ENCODE measurements at regions of chr14 and their contacts with region 1.

Region 1: DNA sequence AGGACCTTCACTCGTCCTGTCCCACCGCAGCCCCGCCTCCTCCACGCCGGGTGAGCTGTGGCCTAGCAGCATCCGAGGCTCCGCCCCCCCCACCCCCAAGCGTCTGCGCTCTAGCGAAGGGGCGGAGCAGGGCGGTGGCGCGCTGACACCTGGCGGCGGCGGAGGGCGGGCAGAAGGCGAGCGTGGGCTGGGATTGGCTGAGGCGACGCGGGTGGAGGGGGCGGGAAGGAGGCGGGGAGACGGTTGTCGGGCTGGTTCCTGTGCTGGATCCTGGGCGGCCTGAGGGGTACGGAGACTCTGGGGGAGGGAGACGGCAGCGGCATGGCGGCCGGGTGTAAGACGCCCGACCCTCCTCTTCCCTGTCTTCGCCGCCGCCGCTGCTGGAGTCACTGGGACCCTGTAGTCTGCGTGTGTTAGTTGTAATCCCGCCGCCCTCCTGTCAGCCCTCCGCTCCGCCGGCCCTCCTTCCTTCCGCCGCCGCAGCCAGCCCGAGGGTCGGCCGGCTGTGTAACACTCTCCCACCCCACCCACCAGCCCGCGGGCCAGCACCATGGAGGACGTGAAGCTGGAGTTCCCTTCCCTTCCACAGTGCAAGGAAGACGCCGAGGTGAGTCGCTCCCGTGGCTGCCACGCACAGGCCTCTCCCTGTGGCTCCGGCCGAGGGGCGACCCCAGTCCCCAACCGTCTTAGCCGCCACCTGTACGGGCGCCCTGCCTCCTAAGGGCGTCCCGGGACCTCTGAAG is at the start of gene STYX:
- DNase-seq: peak; percentile 98
- ATAC-seq: peak; percentile 96
- H3K4me3 ChIP-seq: peak within 1 kb of the TSS; percentile 75 to 99 (median 84)
- H3K4me3 Mint-ChIP-seq: peak within 1 kb of the TSS; percentile 93
- H3K27ac ChIP-seq: peak within 1 kb of the TSS; percentile 73 to 87
- H3K27ac Mint-ChIP-seq: peak within 1 kb of the TSS; percentile 93
- H3K4me1 ChIP-seq: peaks cover 14 to 16% of the 10 kb centered on the region in 2 donors
- H3K4me1 Mint-ChIP-seq: peaks cover 41% of the 10 kb centered on the region
- H3K27me3 ChIP-seq: no peaks in the 10 kb centered on the region
- H3K27me3 Mint-ChIP-seq: no peaks in the 10 kb centered on the region
- CTCF ChIP-seq: no peak
- total RNA-seq, gene STYX: 15.5 and 15.7 TPM in 2 replicates

Region 2: DNA sequence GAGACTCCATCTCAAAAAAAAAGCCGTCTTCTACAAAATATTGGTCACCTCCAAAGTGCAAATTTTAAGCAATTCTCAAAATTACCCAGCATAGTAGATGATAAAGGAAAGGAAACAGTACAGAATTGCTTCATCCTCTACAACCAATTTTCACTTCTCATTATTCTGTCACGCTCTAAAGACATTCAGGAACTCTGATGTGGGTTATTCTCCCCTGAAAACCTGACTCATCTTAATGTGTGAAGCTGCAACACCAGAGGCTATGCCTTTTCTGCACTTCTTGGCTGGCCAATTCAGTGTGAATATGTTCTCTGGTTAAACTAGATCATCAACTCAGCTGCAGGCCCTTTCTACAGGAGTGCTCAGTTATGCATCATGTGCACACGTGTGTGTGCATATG is 405.0 kb before region 1 on chr14:
- CTCF ChIA-PET with region 1: interaction called, 4 read pairs
- POLR2A ChIA-PET with region 1: no interaction called
- intact Hi-C with region 1: loop called (anchors 1 kb)
- DNase-seq: peak; percentile 76
- ATAC-seq: peak; percentile 96
- H3K4me3 ChIP-seq: no peak overlapping the region
- H3K4me3 Mint-ChIP-seq: peak overlapping the region; percentile 33
- H3K27ac ChIP-seq: no peak overlapping the region
- H3K27ac Mint-ChIP-seq: peak overlapping the region; percentile 69
- H3K4me1 ChIP-seq: peaks cover 22 to 23% of the 10 kb centered on the region in 2 donors
- H3K4me1 Mint-ChIP-seq: peaks cover 23% of the 10 kb centered on the region
- H3K27me3 ChIP-seq: peaks cover 0 to 19% (median 13%) of the 10 kb centered on the region in 4 experiments
- H3K27me3 Mint-ChIP-seq: peaks cover 28% of the 10 kb centered on the region
- CTCF ChIP-seq: no peak

Region 3: GRCh38 chr14:52369305-52369801 is 360.7 kb before region 1 on chr14:
- CTCF ChIA-PET with region 1: no interaction called
- POLR2A ChIA-PET with region 1: no interaction called
- intact Hi-C with region 1: no loop called
- DNase-seq: no peak
- ATAC-seq: no peak
- H3K4me3 ChIP-seq: no peak overlapping the region
- H3K4me3 Mint-ChIP-seq: no peak overlapping the region
- H3K27ac ChIP-seq: no peak overlapping the region
- H3K27ac Mint-ChIP-seq: no peak overlapping the region
- H3K4me1 ChIP-seq: no peaks in the 10 kb centered on the region
- H3K4me1 Mint-ChIP-seq: no peaks in the 10 kb centered on the region
- H3K27me3 ChIP-seq: peaks cover 0 to 5% (median 1%) of the 10 kb centered on the region in 4 experiments
- H3K27me3 Mint-ChIP-seq: peaks cover 7% of the 10 kb centered on the region
- CTCF ChIP-seq: no peak

Region 4: DNA sequence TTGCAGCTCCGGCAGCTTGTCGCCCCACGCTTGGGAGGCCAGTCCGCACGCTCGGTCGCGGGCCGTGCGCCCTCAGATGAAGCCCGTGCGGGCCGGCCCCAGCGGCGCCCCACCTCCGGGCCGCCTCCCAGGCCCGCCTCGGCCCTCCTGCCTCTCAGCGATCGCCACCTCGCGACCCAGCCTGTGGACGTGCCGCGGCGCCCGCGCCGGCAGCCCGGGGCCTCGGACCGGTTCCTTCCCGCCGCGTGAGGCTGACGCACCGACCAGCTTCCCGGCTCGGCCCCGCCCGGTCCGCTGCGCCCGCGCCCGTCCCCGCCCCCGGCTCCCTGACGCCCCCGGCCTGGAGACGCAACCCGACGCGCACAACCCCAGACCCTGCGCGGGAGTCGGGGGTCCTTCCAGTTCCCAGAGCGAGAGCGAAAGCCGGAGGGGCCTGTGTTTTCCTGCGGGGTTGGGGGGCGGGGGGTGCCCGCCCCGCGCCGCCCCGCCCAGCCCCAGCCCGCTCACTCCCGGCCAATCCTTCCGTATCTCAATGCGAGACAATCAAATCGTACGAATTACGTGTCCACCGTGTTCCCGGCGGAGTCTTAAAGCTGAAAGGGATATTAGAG is 34.5 kb before region 1 on chr14 and contains the start of gene ERO1A:
- CTCF ChIA-PET with region 1: no interaction called
- POLR2A ChIA-PET with region 1: no interaction called
- intact Hi-C with region 1: loop called (anchors 5 kb)
- DNase-seq: peak; percentile 79
- ATAC-seq: peak; percentile 77
- H3K4me3 ChIP-seq: peak within 1 kb of the TSS; percentile 86 to 94 (median 89)
- H3K4me3 Mint-ChIP-seq: peak within 1 kb of the TSS; percentile 96
- H3K27ac ChIP-seq: peak within 1 kb of the TSS; percentile 70 to 87
- H3K27ac Mint-ChIP-seq: peak within 1 kb of the TSS; percentile 93
- H3K4me1 ChIP-seq: peaks cover 5 to 7% of the 10 kb centered on the region in 2 donors
- H3K4me1 Mint-ChIP-seq: peaks cover 26% of the 10 kb centered on the region
- H3K27me3 ChIP-seq: no peaks in the 10 kb centered on the region
- H3K27me3 Mint-ChIP-seq: no peaks in the 10 kb centered on the region
- CTCF ChIP-seq: no peak
- total RNA-seq, gene ERO1A: 29.7 and 32.8 TPM in 2 replicates

Region 5: GRCh38 chr14:52706724-52707706 is 23.1 kb before region 1 on chr14 and contains the start of gene PSMC6:
- CTCF ChIA-PET with region 1: no interaction called
- POLR2A ChIA-PET with region 1: interaction called, 3 read pairs
- intact Hi-C with region 1: loop called (anchors 1 kb)
- DNase-seq: peak; percentile 94
- ATAC-seq: peak; percentile 99
- H3K4me3 ChIP-seq: peak within 1 kb of the TSS; percentile 83 to 94 (median 88)
- H3K4me3 Mint-ChIP-seq: peak within 1 kb of the TSS; percentile 98
- H3K27ac ChIP-seq: peak within 1 kb of the TSS; percentile 67 to 90
- H3K27ac Mint-ChIP-seq: peak within 1 kb of the TSS; percentile 98
- H3K4me1 ChIP-seq: peaks cover 16% of the 10 kb centered on the region in 2 donors
- H3K4me1 Mint-ChIP-seq: peaks cover 24% of the 10 kb centered on the region
- H3K27me3 ChIP-seq: no peaks in the 10 kb centered on the region
- H3K27me3 Mint-ChIP-seq: no peaks in the 10 kb centered on the region
- CTCF ChIP-seq: no peak
- total RNA-seq, gene PSMC6: 75.3 and 92.2 TPM in 2 replicates

Region 6: GRCh38 chr14:52741865-52742264 is 11.8 kb after region 1 on chr14:
- CTCF ChIA-PET with region 1: interaction called, 17 read pairs
- POLR2A ChIA-PET with region 1: interaction called, 7 read pairs
- intact Hi-C with region 1: loop called (anchors 1 kb)
- DNase-seq: peak; percentile 20
- ATAC-seq: no peak
- H3K4me3 ChIP-seq: peak overlapping the region in 4 of 5 experiments; percentile 2 to 56 (median 38)
- H3K4me3 Mint-ChIP-seq: peak overlapping the region; percentile 66
- H3K27ac ChIP-seq: peak overlapping the region; percentile 72 to 93
- H3K27ac Mint-ChIP-seq: peak overlapping the region; percentile 80
- H3K4me1 ChIP-seq: peaks cover 22 to 26% of the 10 kb centered on the region in 2 donors
- H3K4me1 Mint-ChIP-seq: peaks cover 36% of the 10 kb centered on the region
- H3K27me3 ChIP-seq: no peaks in the 10 kb centered on the region
- H3K27me3 Mint-ChIP-seq: no peaks in the 10 kb centered on the region
- CTCF ChIP-seq: no peak

Region 7: DNA sequence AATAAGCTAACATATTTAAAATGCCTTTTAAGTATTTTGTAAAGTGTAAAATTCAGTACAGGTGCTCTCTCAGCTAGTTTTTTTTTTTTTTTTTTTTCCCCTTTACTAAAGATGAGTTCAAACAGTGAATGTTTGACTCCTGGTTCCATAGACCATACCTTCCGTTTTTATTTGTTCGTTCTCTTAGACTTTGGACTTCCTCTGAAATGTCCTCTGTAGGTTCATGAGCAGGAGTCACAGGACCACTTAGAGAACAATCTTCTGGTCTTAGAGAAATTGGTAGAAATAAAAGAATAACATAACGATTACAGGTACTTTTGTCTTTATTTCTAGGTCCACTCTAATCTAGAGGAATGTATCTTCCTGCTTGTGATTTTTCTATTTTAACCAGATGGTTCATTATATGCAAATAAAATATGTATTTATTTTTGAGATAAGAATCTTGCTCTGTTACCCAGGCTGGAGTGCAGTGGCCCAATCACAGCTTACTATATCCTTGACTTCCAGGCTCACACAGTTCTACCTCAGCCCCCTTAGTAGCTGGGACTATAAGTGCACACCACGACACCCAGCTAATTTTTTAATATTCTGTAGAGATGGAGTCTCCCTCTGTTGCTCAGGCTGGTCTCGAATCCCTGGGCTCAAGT is 25.6 kb after region 1 on chr14:
- CTCF ChIA-PET with region 1: no interaction called
- POLR2A ChIA-PET with region 1: no interaction called
- intact Hi-C with region 1: no loop called
- DNase-seq: no peak
- ATAC-seq: no peak
- H3K4me3 ChIP-seq: no peak overlapping the region
- H3K4me3 Mint-ChIP-seq: no peak overlapping the region
- H3K27ac ChIP-seq: no peak overlapping the region
- H3K27ac Mint-ChIP-seq: no peak overlapping the region
- H3K4me1 ChIP-seq: no peaks in the 10 kb centered on the region
- H3K4me1 Mint-ChIP-seq: no peaks in the 10 kb centered on the region
- H3K27me3 ChIP-seq: no peaks in the 10 kb centered on the region
- H3K27me3 Mint-ChIP-seq: no peaks in the 10 kb centered on the region
- CTCF ChIP-seq: no peak

Region 8: DNA sequence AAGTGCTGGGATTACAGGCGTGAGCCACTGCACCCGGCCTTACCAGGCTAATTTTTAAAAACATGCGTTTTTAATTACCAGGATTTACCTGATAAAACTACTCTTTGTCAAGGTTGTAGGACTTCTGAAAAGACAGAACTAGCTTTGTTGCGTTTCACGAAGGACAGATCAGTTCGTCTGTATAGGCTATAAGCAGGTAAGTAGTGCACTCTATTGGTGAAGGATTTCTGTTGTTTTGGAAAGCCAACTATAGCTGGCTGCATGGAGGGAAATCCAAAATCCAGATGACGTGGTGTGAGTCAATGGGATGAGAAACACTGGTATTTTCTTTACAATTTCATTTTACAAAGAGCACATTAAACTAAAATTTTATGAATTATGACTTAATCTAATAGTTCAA is 46.7 kb after region 1 on chr14:
- CTCF ChIA-PET with region 1: no interaction called
- POLR2A ChIA-PET with region 1: no interaction called
- intact Hi-C with region 1: no loop called
- DNase-seq: no peak
- ATAC-seq: no peak
- H3K4me3 ChIP-seq: no peak overlapping the region
- H3K4me3 Mint-ChIP-seq: no peak overlapping the region
- H3K27ac ChIP-seq: no peak overlapping the region
- H3K27ac Mint-ChIP-seq: no peak overlapping the region
- H3K4me1 ChIP-seq: no peaks in the 10 kb centered on the region
- H3K4me1 Mint-ChIP-seq: no peaks in the 10 kb centered on the region
- H3K27me3 ChIP-seq: no peaks in the 10 kb centered on the region
- H3K27me3 Mint-ChIP-seq: no peaks in the 10 kb centered on the region
- CTCF ChIP-seq: no peak

Region 9: GRCh38 chr14:52791203-52792096 is 61.4 kb after region 1 on chr14 and contains the start of gene GNPNAT1:
- CTCF ChIA-PET with region 1: no interaction called
- POLR2A ChIA-PET with region 1: interaction called, 3 read pairs
- intact Hi-C with region 1: loop called (anchors 1 kb)
- DNase-seq: peak; percentile 89
- ATAC-seq: peak; percentile 96
- H3K4me3 ChIP-seq: peak within 1 kb of the TSS; percentile 58 to 87 (median 80)
- H3K4me3 Mint-ChIP-seq: peak within 1 kb of the TSS; percentile 89
- H3K27ac ChIP-seq: peak within 1 kb of the TSS; percentile 35 to 58
- H3K27ac Mint-ChIP-seq: peak within 1 kb of the TSS; percentile 86
- H3K4me1 ChIP-seq: peaks cover 14 to 20% of the 10 kb centered on the region in 2 donors
- H3K4me1 Mint-ChIP-seq: peaks cover 26% of the 10 kb centered on the region
- H3K27me3 ChIP-seq: no peaks in the 10 kb centered on the region
- H3K27me3 Mint-ChIP-seq: no peaks in the 10 kb centered on the region
- CTCF ChIP-seq: no peak
- total RNA-seq, gene GNPNAT1: 7.8 and 8.3 TPM in 2 replicates